ENCODE measurements at regions of chr15 and their contacts with region 1.

Region 1: GRCh38 chr15:57146506-57147201 is 228.2 kb downstream of the TCF12 start:
- DNase-seq: peak; percentile 14 to 56
- ATAC-seq: peak; percentile 54 to 61; a peak in 2 of 6 replicates
- H3K4me3 ChIP-seq: no peak overlapping the region
- H3K27ac ChIP-seq: no peak overlapping the region
- H3K4me1 ChIP-seq: peaks cover 5% of the 10 kb centered on the region; the same call in 1 of the 3 replicates
- CTCF ChIP-seq: peak; percentile 95
- EP300 ChIP-seq: no peak
- POLR2A ChIP-seq: no peak
- RAD21 ChIP-seq: peak; percentile 88 to 90

Region 2: GRCh38 chr15:56491110-56491722 is 655.4 kb before region 1 on chr15:
- CTCF ChIA-PET with region 1: interaction called, 12 read pairs
- POLR2A ChIA-PET with region 1: no interaction called
- DNase-seq: peak; percentile 84 to 89
- ATAC-seq: peak; percentile 83 to 93
- H3K4me3 ChIP-seq: no peak overlapping the region
- H3K27ac ChIP-seq: no peak overlapping the region
- H3K4me1 ChIP-seq: 0 out of 3 replicates have a peak, but pooled peaks cover 3% of the 10 kb centered on the region
- CTCF ChIP-seq: peak; percentile 93
- EP300 ChIP-seq: no peak
- POLR2A ChIP-seq: no peak
- RAD21 ChIP-seq: peak; percentile 77 to 83

Region 3: GRCh38 chr15:56918046-56918938 is 228.4 kb before region 1 on chr15 and contains the start of gene TCF12:
- CTCF ChIA-PET with region 1: interaction called, 10 read pairs
- POLR2A ChIA-PET with region 1: no interaction called
- DNase-seq: peak; percentile 91 to 99
- ATAC-seq: peak; percentile 88 to 95
- H3K4me3 ChIP-seq: peak within 1 kb of the TSS; percentile 99
- H3K27ac ChIP-seq: peak within 1 kb of the TSS; percentile 96 to 99
- H3K4me1 ChIP-seq: peaks cover 43% of the 10 kb centered on the region
- CTCF ChIP-seq: peak; percentile 46
- EP300 ChIP-seq: no peak
- POLR2A ChIP-seq: peak; percentile 85
- RAD21 ChIP-seq: peak; percentile 55 to 80
- polyA plus RNA-seq, gene TCF12: 121 and 165 TPM in 2 replicates

Region 4: GRCh38 chr15:57158589-57158988 is 11.9 kb after region 1 on chr15:
- CTCF ChIA-PET with region 1: interaction called, 20 read pairs
- POLR2A ChIA-PET with region 1: no interaction called
- DNase-seq: peak in 1 of 2 experiments; percentile 13
- ATAC-seq: peak; percentile 80 to 81; a peak in 4 of 6 replicates
- H3K4me3 ChIP-seq: no peak overlapping the region
- H3K27ac ChIP-seq: no peak overlapping the region
- H3K4me1 ChIP-seq: peaks cover 25% of the 10 kb centered on the region
- CTCF ChIP-seq: no peak
- EP300 ChIP-seq: no peak
- POLR2A ChIP-seq: no peak
- RAD21 ChIP-seq: no peak

Region 5: GRCh38 chr15:57213862-57214261 is 67.2 kb after region 1 on chr15:
- CTCF ChIA-PET with region 1: interaction called, 25 read pairs
- POLR2A ChIA-PET with region 1: no interaction called
- DNase-seq: peak; percentile 8 to 51
- ATAC-seq: peak; percentile 72 to 73; a peak in 5 of 6 replicates
- H3K4me3 ChIP-seq: no peak overlapping the region
- H3K27ac ChIP-seq: no peak overlapping the region
- H3K4me1 ChIP-seq: peaks cover 36% of the 10 kb centered on the region
- CTCF ChIP-seq: peak; percentile 64
- EP300 ChIP-seq: no peak
- POLR2A ChIP-seq: no peak
- RAD21 ChIP-seq: peak; percentile 75 to 84

Region 6: DNA sequence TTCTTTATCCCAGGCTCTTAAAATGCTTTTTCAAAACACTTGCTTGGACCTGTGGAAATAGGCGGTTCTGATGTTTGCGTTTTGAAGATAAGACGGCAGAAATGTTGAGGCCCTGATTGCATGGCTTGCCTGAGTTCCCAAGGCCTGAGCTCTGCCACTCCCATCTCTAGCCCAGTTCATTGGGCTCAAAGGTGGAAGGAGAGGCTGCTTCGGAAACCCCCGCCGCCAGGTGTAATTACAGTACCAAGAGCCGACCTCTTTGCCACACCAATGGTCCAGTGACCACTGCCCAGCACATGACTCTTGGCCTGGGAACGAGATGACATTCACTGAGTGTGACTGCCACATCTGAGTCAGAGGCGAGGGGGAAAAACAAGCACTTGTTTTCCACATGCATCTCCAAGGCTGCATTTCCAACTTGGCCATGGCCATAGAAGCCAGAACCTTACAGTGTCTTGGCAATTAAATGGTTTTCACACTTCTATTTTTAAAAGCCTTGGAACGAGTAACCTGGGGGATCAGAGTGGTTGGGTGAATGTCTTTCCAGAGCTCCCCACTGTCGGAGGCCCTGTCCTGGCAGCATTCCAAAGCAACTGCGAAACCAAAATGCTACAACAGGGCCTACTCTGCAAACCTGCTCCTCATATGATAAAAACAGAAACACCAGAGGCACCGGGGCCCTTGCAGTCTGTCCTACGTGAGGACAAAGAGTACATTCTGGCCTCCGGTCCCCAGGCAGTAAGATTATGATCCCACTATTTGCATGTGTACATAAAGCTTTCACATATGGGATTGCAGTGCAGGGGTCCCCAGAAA is 165.9 kb after region 1 on chr15:
- CTCF ChIA-PET with region 1: interaction called, 114 read pairs
- POLR2A ChIA-PET with region 1: no interaction called
- DNase-seq: no peak
- ATAC-seq: no peak
- H3K4me3 ChIP-seq: no peak overlapping the region
- H3K27ac ChIP-seq: no peak overlapping the region
- H3K4me1 ChIP-seq: peaks cover 5% of the 10 kb centered on the region
- CTCF ChIP-seq: no peak
- EP300 ChIP-seq: no peak
- POLR2A ChIP-seq: no peak
- RAD21 ChIP-seq: no peak